Heart left ventricle (tissue), 16 donors: ENCODE measurements at regions of chrX and their contacts with region 1.

Region 1: GRCh38 chrX:118726887-118727739 is at the start of gene IL13RA1:
- DNase-seq: peak; percentile 77 to 88 (median 84)
- ATAC-seq: peak; percentile 81 to 97 (median 96)
- H3K4me3 ChIP-seq: peak within 1 kb of the TSS; percentile 55 to 91 (median 66)
- H3K27ac ChIP-seq: peak within 1 kb of the TSS; percentile 84 to 96 (median 90)
- H3K4me1 ChIP-seq: peaks cover 0 to 26% (median 2%) of the 10 kb centered on the region in 12 donors
- H3K27me3 ChIP-seq: no peaks in the 10 kb centered on the region
- CTCF ChIP-seq: no peak
- POLR2A ChIP-seq: peak in 1 of 2 donors; percentile 56
- total RNA-seq, gene IL13RA1: 10.6 to 44.7 (median 18.9) TPM

Region 2: DNA sequence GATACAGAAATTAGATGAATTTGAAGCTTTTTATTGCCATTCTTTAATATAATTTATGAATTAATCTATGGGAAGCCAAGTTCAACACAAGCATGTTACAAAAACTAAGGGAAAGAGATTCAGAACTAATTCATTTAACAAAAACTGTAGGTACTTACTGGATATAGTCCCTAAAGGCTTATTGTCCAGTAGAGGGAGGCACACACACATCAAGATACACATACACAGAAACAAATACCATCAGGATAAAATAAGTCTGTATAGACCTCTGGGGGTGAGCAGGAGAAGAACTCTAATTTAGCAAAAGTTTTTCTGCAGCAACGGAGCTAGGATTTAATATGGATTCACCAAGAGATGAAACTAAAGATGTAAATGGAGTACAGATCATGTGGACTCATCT is 82.7 kb before region 1 on chrX:
- intact Hi-C with region 1: loop called in 1 of 10 experiments (anchors 10 kb)
- DNase-seq: no peak
- ATAC-seq: no peak
- H3K4me3 ChIP-seq: no peak overlapping the region
- H3K27ac ChIP-seq: no peak overlapping the region
- H3K4me1 ChIP-seq: no peaks in the 10 kb centered on the region
- H3K27me3 ChIP-seq: peaks cover 0 to 2% (median 0%) of the 10 kb centered on the region in 9 donors
- CTCF ChIP-seq: peak in 10 of 12 donors; percentile 16 to 54 (median 37)
- POLR2A ChIP-seq: no peak

Region 3: DNA sequence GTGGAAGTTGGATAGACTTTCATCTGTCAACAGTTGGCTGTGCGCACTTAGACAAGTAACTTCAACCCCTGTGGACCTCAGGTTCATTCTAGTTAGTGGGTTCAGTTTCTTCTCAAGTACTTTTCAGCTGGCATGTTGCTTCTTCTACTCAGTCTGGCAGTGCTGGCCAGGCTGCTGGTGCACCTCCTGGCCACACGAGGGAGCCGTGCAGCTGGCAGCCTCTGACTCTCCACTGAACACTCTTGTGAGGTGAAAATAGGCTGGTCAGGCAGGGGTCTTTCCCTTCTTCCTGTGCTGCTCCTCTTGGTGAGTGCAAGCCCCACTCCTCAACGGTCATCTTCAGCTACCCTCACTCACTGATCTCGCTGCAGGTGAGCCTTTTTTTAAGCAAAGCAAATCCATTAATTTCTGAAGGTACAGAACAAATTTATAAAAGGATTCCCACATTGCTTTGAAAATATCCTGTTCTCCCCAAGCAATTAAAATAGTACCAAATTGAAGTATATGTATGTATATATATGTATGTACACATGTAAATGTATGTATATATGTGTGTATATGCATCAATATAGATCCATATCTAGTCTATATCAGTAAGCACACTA is 277.9 kb after region 1 on chrX:
- intact Hi-C with region 1: no loop called
- DNase-seq: peak; percentile 25 to 72 (median 39)
- ATAC-seq: peak in 3 of 4 donors; percentile 72 to 83 (median 79)
- H3K4me3 ChIP-seq: no peak overlapping the region
- H3K27ac ChIP-seq: no peak overlapping the region
- H3K4me1 ChIP-seq: peaks cover 0 to 18% (median 0%) of the 10 kb centered on the region in 12 donors
- H3K27me3 ChIP-seq: peaks cover 0 to 9% (median 0%) of the 10 kb centered on the region in 9 donors
- CTCF ChIP-seq: peak; percentile 62 to 92 (median 76)
- POLR2A ChIP-seq: no peak